ENCODE measurements at regions of chr6 and their contacts with region 1.

Region 1: GRCh38 chr6:157830354-157831017 is 7.4 kb downstream of the SNX9 start:
- DNase-seq: peak in 1 of 9 experiments; percentile 24
- ATAC-seq: no peak
- H3K4me3 ChIP-seq: no peak overlapping the region
- H3K4me3 Mint-ChIP-seq: no peak overlapping the region
- H3K27ac ChIP-seq: no peak overlapping the region
- H3K27ac Mint-ChIP-seq: no peak overlapping the region
- H3K4me1 ChIP-seq: peaks cover 42% of the 10 kb centered on the region
- H3K4me1 Mint-ChIP-seq: peaks cover 70% of the 10 kb centered on the region
- H3K27me3 ChIP-seq: no peaks in the 10 kb centered on the region
- H3K27me3 Mint-ChIP-seq: no peaks in the 10 kb centered on the region
- CTCF ChIP-seq: no peak

Region 2: DNA sequence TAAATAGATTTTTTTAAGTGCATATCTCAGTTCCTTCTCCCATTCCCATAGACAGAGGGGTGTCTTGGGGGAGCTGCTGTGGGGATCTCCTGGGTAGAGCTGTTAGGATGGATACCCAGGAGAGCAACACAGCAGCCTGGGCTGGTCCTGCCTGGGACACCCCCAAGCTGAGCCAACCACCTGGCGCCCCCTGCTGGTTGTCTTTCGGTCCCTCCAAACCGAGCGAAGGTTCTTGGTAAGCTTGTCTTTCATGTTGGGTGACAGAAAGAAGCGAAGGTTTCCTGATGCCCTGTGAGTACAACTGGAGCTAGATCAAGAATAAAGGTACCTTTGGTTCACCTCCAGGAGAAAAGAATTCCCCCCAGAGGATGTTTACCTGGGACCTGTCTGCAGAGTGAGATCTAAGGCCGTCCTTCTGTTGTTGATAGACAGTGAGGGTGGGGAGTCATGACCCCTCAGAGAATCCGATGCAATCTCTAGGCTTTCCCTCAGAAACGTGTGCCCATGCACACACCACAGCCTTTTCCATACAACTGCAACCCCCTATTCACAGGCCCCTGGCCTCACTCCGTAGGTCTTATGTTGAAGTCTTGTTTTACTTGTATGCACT is 43.4 kb after region 1 on chr6:
- CTCF ChIA-PET with region 1: interaction called, 7 read pairs
- POLR2A ChIA-PET with region 1: no interaction called
- intact Hi-C with region 1: loop called (anchors 2 to 5 kb)
- DNase-seq: peak; percentile 65 to 91 (median 81)
- ATAC-seq: peak; percentile 76
- H3K4me3 ChIP-seq: no peak overlapping the region
- H3K4me3 Mint-ChIP-seq: no peak overlapping the region
- H3K27ac ChIP-seq: no peak overlapping the region
- H3K27ac Mint-ChIP-seq: no peak overlapping the region
- H3K4me1 ChIP-seq: peaks cover 25% of the 10 kb centered on the region
- H3K4me1 Mint-ChIP-seq: peaks cover 29% of the 10 kb centered on the region
- H3K27me3 ChIP-seq: no peaks in the 10 kb centered on the region
- H3K27me3 Mint-ChIP-seq: no peaks in the 10 kb centered on the region
- CTCF ChIP-seq: peak; percentile 84